GM10248 (cell line): ENCODE measurements at regions of chr11 and their contacts with region 1.

Region 1: DNA sequence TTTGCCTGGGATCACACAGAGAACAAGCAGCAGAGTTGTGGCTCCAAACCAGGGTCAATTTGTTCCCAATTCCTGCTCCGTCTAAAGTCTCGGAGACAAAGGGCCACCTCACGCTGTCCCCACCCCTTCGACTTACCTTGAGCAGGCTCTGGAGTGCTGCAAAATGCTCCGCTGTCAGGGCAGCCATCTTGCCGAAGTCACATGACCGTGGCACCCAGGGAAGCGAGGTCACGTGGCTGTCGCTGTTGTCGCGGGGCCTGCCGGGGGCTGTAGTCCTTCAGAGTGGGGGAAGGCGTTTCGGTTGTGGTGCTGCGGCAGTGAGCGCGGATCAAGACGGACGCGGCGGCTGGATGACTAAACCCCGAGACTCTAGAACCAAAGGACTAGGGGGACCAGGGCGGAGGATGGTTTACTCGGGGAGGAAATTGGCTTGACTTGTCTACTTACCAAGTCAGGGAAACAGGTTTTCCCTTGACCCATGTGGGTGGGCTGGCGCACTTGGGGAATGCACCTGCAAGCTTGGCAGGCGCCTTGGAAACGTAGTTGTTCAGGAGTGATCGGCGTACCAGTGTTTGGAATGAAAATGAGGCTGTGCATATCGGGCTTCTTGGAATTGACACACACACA is at the start of gene COMMD9:
- DNase-seq: peak; percentile 94
- CTCF ChIP-seq: no peak

Region 2: DNA sequence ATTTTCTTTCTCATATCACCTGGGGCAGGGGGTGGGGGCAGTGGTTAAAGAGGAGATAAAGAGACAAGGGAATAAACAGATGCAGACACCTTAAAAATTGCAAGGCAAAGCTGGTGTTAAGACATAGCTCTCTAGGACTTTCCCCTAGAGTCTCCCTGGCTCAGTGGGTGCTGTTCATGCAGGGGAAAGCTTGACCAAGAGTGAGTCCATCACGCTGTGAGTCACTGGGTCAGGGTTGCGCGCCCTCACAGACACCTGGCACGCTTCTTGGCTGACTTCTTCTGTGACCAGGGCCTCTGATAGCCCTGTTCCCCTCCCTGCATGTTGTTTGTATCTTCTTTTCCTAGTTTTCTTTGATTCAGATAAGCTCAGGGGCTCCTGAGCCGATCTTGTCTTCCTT is 32.0 kb before region 1 on chr11:
- CTCF ChIA-PET with region 1: no interaction called
- POLR2A ChIA-PET with region 1: no interaction called
- DNase-seq: no peak
- CTCF ChIP-seq: no peak

Region 3: DNA sequence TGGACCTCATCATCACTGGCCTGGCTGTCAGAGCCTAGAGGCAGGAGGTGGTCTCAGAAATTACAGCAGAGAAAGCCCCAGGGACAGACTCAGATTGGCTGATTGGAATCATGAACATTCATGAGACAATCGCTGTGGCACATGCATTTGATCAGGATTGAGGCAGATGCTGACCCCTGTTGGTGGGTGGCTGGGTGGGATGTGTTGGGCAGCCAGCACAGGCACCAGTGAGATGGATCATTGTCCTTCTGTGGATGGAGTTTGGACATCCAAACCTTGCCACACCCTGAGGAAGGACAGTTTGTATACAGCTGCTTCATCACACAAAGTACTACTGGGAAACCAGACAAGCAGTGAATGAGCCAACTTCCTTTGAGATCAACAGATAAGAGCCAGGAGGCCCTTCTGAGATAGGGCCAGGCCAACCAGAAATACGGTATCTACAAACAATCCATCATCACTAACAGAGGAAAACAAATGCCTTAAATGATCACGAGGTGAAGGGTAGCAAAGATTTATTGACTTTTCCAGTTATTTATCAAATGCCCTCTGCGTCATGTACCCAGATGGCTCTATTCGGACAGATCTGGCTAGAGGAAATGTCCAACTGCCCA is 17.4 kb before region 1 on chr11:
- CTCF ChIA-PET with region 1: interaction called, 12 read pairs
- POLR2A ChIA-PET with region 1: no interaction called
- DNase-seq: no peak
- CTCF ChIP-seq: no peak

Region 4: GRCh38 chr11:36312611-36313472 is 23.5 kb after region 1 on chr11:
- CTCF ChIA-PET with region 1: interaction called, 32 read pairs
- POLR2A ChIA-PET with region 1: no interaction called
- DNase-seq: no peak
- CTCF ChIP-seq: no peak

Region 5: GRCh38 chr11:36492724-36493304 is 203.5 kb after region 1 on chr11:
- CTCF ChIA-PET with region 1: interaction called, 185 read pairs
- POLR2A ChIA-PET with region 1: no interaction called
- DNase-seq: peak; percentile 45
- CTCF ChIP-seq: peak; percentile 69

Region 6: GRCh38 chr11:36509694-36510566 is 220.6 kb after region 1 on chr11 and contains the start of gene TRAF6:
- CTCF ChIA-PET with region 1: interaction called, 30 read pairs
- POLR2A ChIA-PET with region 1: no interaction called
- DNase-seq: peak; percentile 94
- CTCF ChIP-seq: peak; percentile 92